SK-N-SH (cell line): ENCODE measurements at regions of chr12 and their contacts with region 1.

Region 1: DNA sequence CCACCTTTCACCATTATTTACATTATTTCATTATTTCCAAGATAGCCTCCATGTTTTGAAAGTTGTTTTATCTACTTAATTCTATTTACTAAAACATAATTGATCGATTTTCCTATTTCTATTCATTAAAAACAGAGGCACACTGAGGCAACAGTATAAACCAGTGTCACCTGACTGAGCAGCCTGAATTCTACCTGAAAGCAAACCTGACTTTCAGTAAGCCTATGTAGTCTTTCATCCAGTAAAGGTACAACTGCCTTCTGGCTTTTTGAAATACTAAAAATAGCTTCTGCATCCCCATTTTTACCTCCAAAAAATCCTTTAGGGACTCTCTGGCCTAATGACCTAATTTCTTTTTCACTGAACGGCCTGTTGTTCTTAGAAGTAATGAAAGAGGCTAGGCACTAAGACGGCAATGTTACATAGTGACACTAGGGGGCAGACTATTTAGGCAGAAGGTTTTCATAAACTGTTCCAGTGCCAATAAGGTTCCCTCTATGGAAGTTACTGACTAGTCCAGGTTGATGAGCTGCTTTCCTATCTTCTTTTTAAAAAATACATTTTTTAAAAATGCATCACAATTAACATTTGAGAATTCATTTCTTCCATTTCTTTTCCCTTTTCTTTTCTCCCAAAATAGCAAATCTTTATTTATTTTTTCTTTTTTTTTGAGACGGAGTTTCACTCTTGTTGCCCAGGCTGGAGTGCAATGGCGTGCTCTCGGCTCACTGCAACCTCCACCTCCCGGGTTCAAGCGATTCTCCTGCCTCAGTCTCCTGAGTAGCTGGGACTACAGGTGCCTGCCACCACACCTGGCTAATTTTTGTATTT is 17.5 kb downstream of the ANAPC5 start:
- DNase-seq: peak; percentile 64
- H3K4me3 ChIP-seq: no peak overlapping the region; a peak in 1 of 4 replicates
- H3K27ac ChIP-seq: no peak overlapping the region
- H3K4me1 ChIP-seq: peaks cover 0 to 4% of the 10 kb centered on the region in 2 experiments; a peak in 1 of 4 replicates
- H3K27me3 ChIP-seq: no peaks in the 10 kb centered on the region
- CTCF ChIP-seq: peak; percentile 92
- EP300 ChIP-seq: no peak
- RAD21 ChIP-seq: peak; percentile 82

Region 2: GRCh38 chr12:120067084-120067869 is 1267.5 kb before region 1 on chr12:
- CTCF ChIA-PET with region 1: no interaction called
- POLR2A ChIA-PET with region 1: no interaction called
- DNase-seq: no peak
- H3K4me3 ChIP-seq: no peak overlapping the region
- H3K27ac ChIP-seq: no peak overlapping the region
- H3K4me1 ChIP-seq: peaks cover 0 to 2% of the 10 kb centered on the region in 2 experiments; a peak in 1 of 4 replicates
- H3K27me3 ChIP-seq: peaks cover 4% of the 10 kb centered on the region; the same call in 1 of the 2 replicates
- CTCF ChIP-seq: no peak
- EP300 ChIP-seq: no peak
- RAD21 ChIP-seq: no peak

Region 3: DNA sequence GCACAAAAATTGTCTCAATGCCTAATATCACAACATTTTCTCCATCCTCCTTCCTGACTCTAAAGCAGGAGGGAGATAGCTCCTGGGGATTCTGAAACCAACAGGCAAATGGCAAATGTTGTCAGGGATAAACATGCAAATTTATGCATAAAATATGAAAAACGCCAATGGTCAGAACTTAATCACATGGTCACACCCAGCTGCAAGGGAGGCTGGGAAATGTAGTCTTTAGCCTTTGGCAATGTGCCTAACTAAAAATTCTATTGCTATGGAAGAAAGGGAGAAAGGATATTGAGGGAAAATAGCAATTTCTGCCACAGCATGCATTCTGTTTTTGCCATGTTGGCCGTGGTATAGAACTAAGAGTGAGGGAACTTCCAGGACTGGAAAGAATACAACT is 284.0 kb before region 1 on chr12:
- CTCF ChIA-PET with region 1: no interaction called
- POLR2A ChIA-PET with region 1: no interaction called
- DNase-seq: no peak
- H3K4me3 ChIP-seq: no peak overlapping the region
- H3K27ac ChIP-seq: no peak overlapping the region
- H3K4me1 ChIP-seq: peaks cover 0 to 3% of the 10 kb centered on the region in 2 experiments; a peak in 1 of 4 replicates
- H3K27me3 ChIP-seq: no peaks in the 10 kb centered on the region; the same call in 1 of the 2 replicates
- CTCF ChIP-seq: no peak
- EP300 ChIP-seq: no peak
- RAD21 ChIP-seq: no peak

Region 4: GRCh38 chr12:121110211-121110940 is 224.4 kb before region 1 on chr12:
- CTCF ChIA-PET with region 1: no interaction called
- POLR2A ChIA-PET with region 1: no interaction called
- DNase-seq: peak; percentile 65
- H3K4me3 ChIP-seq: no peak overlapping the region; a peak in 1 of 4 replicates
- H3K27ac ChIP-seq: no peak overlapping the region
- H3K4me1 ChIP-seq: no peaks in the 10 kb centered on the region
- H3K27me3 ChIP-seq: no peaks in the 10 kb centered on the region
- CTCF ChIP-seq: peak; percentile 97
- EP300 ChIP-seq: no peak
- RAD21 ChIP-seq: peak; percentile 91

Region 5: GRCh38 chr12:121345151-121345815 is 10.6 kb after region 1 on chr12:
- CTCF ChIA-PET with region 1: interaction called, 20 read pairs
- POLR2A ChIA-PET with region 1: no interaction called
- DNase-seq: no peak
- H3K4me3 ChIP-seq: no peak overlapping the region
- H3K27ac ChIP-seq: no peak overlapping the region
- H3K4me1 ChIP-seq: no peaks in the 10 kb centered on the region
- H3K27me3 ChIP-seq: no peaks in the 10 kb centered on the region
- CTCF ChIP-seq: no peak
- EP300 ChIP-seq: no peak
- RAD21 ChIP-seq: no peak

Region 6: GRCh38 chr12:121383601-121384021 is 48.9 kb after region 1 on chr12:
- CTCF ChIA-PET with region 1: interaction called, 12 read pairs
- POLR2A ChIA-PET with region 1: no interaction called
- DNase-seq: no peak
- H3K4me3 ChIP-seq: no peak overlapping the region
- H3K27ac ChIP-seq: no peak overlapping the region
- H3K4me1 ChIP-seq: no peaks in the 10 kb centered on the region
- H3K27me3 ChIP-seq: no peaks in the 10 kb centered on the region
- CTCF ChIP-seq: peak; percentile 35
- EP300 ChIP-seq: no peak
- RAD21 ChIP-seq: no peak

Region 7: GRCh38 chr12:121432740-121433480 is 98.2 kb after region 1 on chr12:
- CTCF ChIA-PET with region 1: interaction called, 27 read pairs
- POLR2A ChIA-PET with region 1: interaction called, 3 read pairs
- DNase-seq: no peak
- H3K4me3 ChIP-seq: no peak overlapping the region
- H3K27ac ChIP-seq: no peak overlapping the region
- H3K4me1 ChIP-seq: no peaks in the 10 kb centered on the region
- H3K27me3 ChIP-seq: no peaks in the 10 kb centered on the region
- CTCF ChIP-seq: no peak
- EP300 ChIP-seq: no peak
- RAD21 ChIP-seq: no peak

Region 8: GRCh38 chr12:121452340-121452984 is 117.7 kb after region 1 on chr12:
- CTCF ChIA-PET with region 1: interaction called, 14 read pairs
- POLR2A ChIA-PET with region 1: no interaction called
- DNase-seq: no peak
- H3K4me3 ChIP-seq: no peak overlapping the region
- H3K27ac ChIP-seq: no peak overlapping the region
- H3K4me1 ChIP-seq: peaks cover 0 to 3% of the 10 kb centered on the region in 2 experiments; a peak in 1 of 4 replicates
- H3K27me3 ChIP-seq: no peaks in the 10 kb centered on the region
- CTCF ChIP-seq: no peak
- EP300 ChIP-seq: no peak
- RAD21 ChIP-seq: no peak